Endothelial cell of umbilical vein (primary cell): ENCODE measurements at regions of chr18 and their contacts with region 1.

Region 1: GRCh38 chr18:31206787-31207381 is 44.2 kb upstream of the DSC1 start:
- DNase-seq: peak; percentile 34
- H3K4me3 ChIP-seq: no peak overlapping the region
- H3K27ac ChIP-seq: no peak overlapping the region
- H3K4me1 ChIP-seq: no peaks in the 10 kb centered on the region
- H3K27me3 ChIP-seq: no peaks in the 10 kb centered on the region
- CTCF ChIP-seq: no peak
- POLR2A ChIP-seq: no peak

Region 2: GRCh38 chr18:31091350-31091749 is 115.5 kb before region 1 on chr18:
- CTCF ChIA-PET with region 1: no interaction called
- POLR2A ChIA-PET with region 1: no interaction called
- dilution Hi-C with region 1: no loop called
- intact Hi-C with region 1: no loop called
- DNase-seq: no peak
- H3K4me3 ChIP-seq: no peak overlapping the region
- H3K27ac ChIP-seq: no peak overlapping the region
- H3K4me1 ChIP-seq: no peaks in the 10 kb centered on the region
- H3K27me3 ChIP-seq: no peaks in the 10 kb centered on the region
- CTCF ChIP-seq: no peak
- POLR2A ChIP-seq: no peak

Region 3: DNA sequence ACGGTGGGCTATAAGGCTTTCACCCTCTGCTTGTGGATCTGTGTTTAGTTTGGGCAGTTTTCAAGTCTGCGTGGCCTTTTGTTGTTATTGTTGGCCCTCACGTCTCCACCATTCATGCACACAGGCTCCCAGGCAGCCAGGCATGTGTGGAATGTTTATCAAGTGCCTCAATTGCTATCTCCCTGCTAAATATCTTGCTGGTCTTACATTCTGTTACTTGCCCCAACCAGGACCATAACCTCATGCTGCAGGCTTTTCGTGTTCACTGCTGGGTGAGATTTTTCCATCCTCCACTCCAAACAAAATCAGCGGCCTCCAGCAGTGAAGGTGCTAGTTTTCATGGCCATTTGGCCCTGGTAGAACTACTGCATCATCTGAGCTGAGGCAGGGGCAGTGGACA is 18.8 kb after region 1 on chr18:
- CTCF ChIA-PET with region 1: interaction called, 3 read pairs
- POLR2A ChIA-PET with region 1: no interaction called
- dilution Hi-C with region 1: no loop called
- intact Hi-C with region 1: loop called (anchors 1 kb)
- DNase-seq: peak; percentile 67
- H3K4me3 ChIP-seq: no peak overlapping the region
- H3K27ac ChIP-seq: no peak overlapping the region
- H3K4me1 ChIP-seq: no peaks in the 10 kb centered on the region
- H3K27me3 ChIP-seq: no peaks in the 10 kb centered on the region
- CTCF ChIP-seq: no peak
- POLR2A ChIP-seq: no peak

Region 4: GRCh38 chr18:31876707-31877106 is 669.8 kb after region 1 on chr18:
- CTCF ChIA-PET with region 1: no interaction called
- POLR2A ChIA-PET with region 1: no interaction called
- dilution Hi-C with region 1: no loop called
- intact Hi-C with region 1: no loop called
- DNase-seq: no peak
- H3K4me3 ChIP-seq: no peak overlapping the region
- H3K27ac ChIP-seq: peak overlapping the region; percentile 5
- H3K4me1 ChIP-seq: peaks cover 5% of the 10 kb centered on the region
- H3K27me3 ChIP-seq: no peaks in the 10 kb centered on the region
- CTCF ChIP-seq: no peak
- POLR2A ChIP-seq: no peak

Region 5: DNA sequence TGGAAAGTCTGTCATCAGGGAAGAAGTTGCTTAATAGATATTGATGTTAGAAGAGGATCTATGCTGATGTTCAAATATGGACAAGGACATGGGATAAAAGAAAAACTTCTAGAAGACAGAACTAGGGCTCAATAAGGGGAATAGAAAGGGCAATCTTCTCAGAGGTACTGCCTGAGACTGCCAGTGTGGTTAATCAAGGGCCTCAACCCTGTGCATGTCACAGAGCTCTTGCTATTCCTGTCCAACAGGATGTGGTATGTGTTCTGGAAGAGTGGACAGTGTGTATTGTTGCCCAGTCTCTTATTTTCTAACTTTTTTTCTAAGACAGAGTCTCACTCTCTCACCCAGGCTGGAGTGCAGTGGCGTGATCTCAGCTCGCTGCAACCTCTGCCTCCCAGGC is 783.9 kb after region 1 on chr18:
- CTCF ChIA-PET with region 1: no interaction called
- POLR2A ChIA-PET with region 1: no interaction called
- dilution Hi-C with region 1: no loop called
- intact Hi-C with region 1: no loop called
- DNase-seq: no peak
- H3K4me3 ChIP-seq: no peak overlapping the region
- H3K27ac ChIP-seq: no peak overlapping the region
- H3K4me1 ChIP-seq: no peaks in the 10 kb centered on the region
- H3K27me3 ChIP-seq: no peaks in the 10 kb centered on the region
- CTCF ChIP-seq: no peak
- POLR2A ChIP-seq: no peak

Region 6: DNA sequence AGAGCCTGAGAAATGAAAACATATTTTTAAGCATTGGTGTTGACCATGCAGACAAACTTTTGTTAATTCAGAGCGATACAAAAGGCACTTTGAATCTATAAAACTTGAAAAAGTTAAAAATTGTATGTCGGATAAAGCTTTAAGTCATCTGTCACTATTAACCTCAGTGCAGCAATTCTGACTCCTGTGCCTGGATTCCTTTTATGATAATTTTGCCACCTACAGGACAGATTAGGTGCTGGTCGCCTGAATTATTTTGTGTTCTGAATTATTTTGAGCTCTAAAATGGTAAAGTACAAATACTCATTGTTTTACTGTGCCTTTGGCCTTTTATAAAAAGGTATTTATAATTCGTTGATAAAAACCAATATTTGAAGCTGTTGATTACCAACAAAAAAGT is 865.4 kb after region 1 on chr18:
- CTCF ChIA-PET with region 1: no interaction called
- POLR2A ChIA-PET with region 1: no interaction called
- dilution Hi-C with region 1: no loop called
- intact Hi-C with region 1: no loop called
- DNase-seq: peak; percentile 14
- H3K4me3 ChIP-seq: no peak overlapping the region
- H3K27ac ChIP-seq: no peak overlapping the region
- H3K4me1 ChIP-seq: no peaks in the 10 kb centered on the region
- H3K27me3 ChIP-seq: no peaks in the 10 kb centered on the region
- CTCF ChIP-seq: peak; percentile 7 to 34
- POLR2A ChIP-seq: no peak